Ascending aorta (tissue), 2 donors: ENCODE measurements at regions of chr13 and their contacts with region 1.

Region 1: GRCh38 chr13:110377178-110377825 is 70.2 kb downstream of the COL4A2 start:
- DNase-seq: no peak
- H3K4me3 ChIP-seq: peak overlapping the region in 1 of 2 donors; percentile 7
- H3K27ac ChIP-seq: peak overlapping the region; percentile 83 to 87
- H3K4me1 ChIP-seq: peaks cover 35 to 80% of the 10 kb centered on the region in 2 donors
- H3K27me3 ChIP-seq: no peaks in the 10 kb centered on the region
- CTCF ChIP-seq: no peak

Region 2: GRCh38 chr13:110387391-110388107 is 10.2 kb after region 1 on chr13:
- intact Hi-C with region 1: loop called (anchors 1 kb)
- DNase-seq: peak; percentile 65 to 94
- H3K4me3 ChIP-seq: peak overlapping the region; percentile 7 to 50
- H3K27ac ChIP-seq: peak overlapping the region; percentile 98 to 99
- H3K4me1 ChIP-seq: peaks cover 14 to 52% of the 10 kb centered on the region in 2 donors
- H3K27me3 ChIP-seq: no peaks in the 10 kb centered on the region
- CTCF ChIP-seq: peak in 2 of 3 experiments; percentile 13 to 17

Region 3: DNA sequence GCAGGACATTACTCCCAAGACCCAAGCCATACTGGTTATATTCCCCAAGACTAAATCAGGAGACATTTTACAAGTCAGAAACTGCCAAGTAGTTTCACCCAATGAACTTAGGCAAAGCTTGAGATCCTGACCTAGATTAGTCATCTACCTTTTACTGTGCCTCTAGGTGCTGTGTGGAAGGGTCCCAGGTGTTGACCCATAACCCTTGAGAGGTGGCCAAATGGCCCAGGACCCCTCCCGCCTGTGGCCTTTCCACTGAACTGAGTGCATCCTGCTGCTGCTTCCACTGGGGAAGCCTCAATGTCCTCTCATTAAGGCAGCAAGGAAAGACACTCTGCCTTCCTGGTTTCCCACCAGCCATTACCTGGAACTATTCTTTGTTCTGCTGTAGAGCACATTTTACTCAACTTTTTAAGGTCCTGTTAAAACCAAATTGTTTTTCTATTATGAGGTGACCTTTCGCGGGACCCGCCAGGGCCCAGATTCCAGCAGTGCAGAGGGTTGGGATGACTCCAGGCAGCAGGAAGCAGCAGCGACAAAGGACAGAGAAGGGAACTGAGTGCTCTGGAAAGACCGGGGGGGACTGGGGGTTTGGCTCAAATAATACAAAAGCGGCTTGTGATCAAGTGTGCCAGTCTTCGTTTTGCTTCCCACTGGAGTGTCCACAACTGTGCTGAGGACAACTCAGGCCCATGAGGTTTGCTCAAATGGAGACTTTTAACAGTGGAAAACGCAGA is 510.5 kb after region 1 on chr13:
- intact Hi-C with region 1: no loop called
- DNase-seq: no peak
- H3K4me3 ChIP-seq: no peak overlapping the region
- H3K27ac ChIP-seq: no peak overlapping the region
- H3K4me1 ChIP-seq: no peaks in the 10 kb centered on the region
- H3K27me3 ChIP-seq: no peaks in the 10 kb centered on the region
- CTCF ChIP-seq: no peak